Activated CD4-positive, alpha-beta T cell treated with anti-CD3 and anti-CD28 coated beads for 36 hours (primary cell): ENCODE measurements at regions of chr16 and their contacts with region 1.

Region 1: GRCh38 chr16:53054670-53055485 is at the start of gene CHD9:
- DNase-seq: peak; percentile 82
- ATAC-seq: peak; percentile 89
- H3K4me3 Mint-ChIP-seq: peak within 1 kb of the TSS; percentile 70
- H3K27ac Mint-ChIP-seq: peak within 1 kb of the TSS; percentile 83
- H3K4me1 Mint-ChIP-seq: peaks cover 21% of the 10 kb centered on the region
- H3K27me3 Mint-ChIP-seq: peaks cover 6% of the 10 kb centered on the region
- total RNA-seq, gene CHD9: 13.2 to 18.8 TPM

Region 2: GRCh38 chr16:53099318-53100130 is 44.6 kb after region 1 on chr16:
- CTCF ChIA-PET with region 1: interaction called, 10 read pairs
- POLR2A ChIA-PET with region 1: no interaction called
- intact Hi-C with region 1: loop called (anchors 1 to 2 kb)
- DNase-seq: peak; percentile 69
- ATAC-seq: peak; percentile 82
- H3K4me3 Mint-ChIP-seq: peak overlapping the region; percentile 68
- H3K27ac Mint-ChIP-seq: peak overlapping the region; percentile 86
- H3K4me1 Mint-ChIP-seq: peaks cover 18% of the 10 kb centered on the region
- H3K27me3 Mint-ChIP-seq: no peaks in the 10 kb centered on the region

Region 3: GRCh38 chr16:53172517-53172916 is 117.6 kb after region 1 on chr16:
- CTCF ChIA-PET with region 1: no interaction called
- POLR2A ChIA-PET with region 1: no interaction called
- intact Hi-C with region 1: no loop called
- DNase-seq: no peak
- ATAC-seq: no peak
- H3K4me3 Mint-ChIP-seq: no peak overlapping the region
- H3K27ac Mint-ChIP-seq: no peak overlapping the region
- H3K4me1 Mint-ChIP-seq: no peaks in the 10 kb centered on the region
- H3K27me3 Mint-ChIP-seq: no peaks in the 10 kb centered on the region

Region 4: GRCh38 chr16:53207810-53208752 is 153.2 kb after region 1 on chr16:
- CTCF ChIA-PET with region 1: interaction called, 13 read pairs
- POLR2A ChIA-PET with region 1: no interaction called
- intact Hi-C with region 1: loop called (anchors 1 to 5 kb)
- DNase-seq: peak; percentile 24
- ATAC-seq: peak; percentile 55
- H3K4me3 Mint-ChIP-seq: peak overlapping the region; percentile 61
- H3K27ac Mint-ChIP-seq: peak overlapping the region; percentile 83
- H3K4me1 Mint-ChIP-seq: peaks cover 13% of the 10 kb centered on the region
- H3K27me3 Mint-ChIP-seq: no peaks in the 10 kb centered on the region

Region 5: DNA sequence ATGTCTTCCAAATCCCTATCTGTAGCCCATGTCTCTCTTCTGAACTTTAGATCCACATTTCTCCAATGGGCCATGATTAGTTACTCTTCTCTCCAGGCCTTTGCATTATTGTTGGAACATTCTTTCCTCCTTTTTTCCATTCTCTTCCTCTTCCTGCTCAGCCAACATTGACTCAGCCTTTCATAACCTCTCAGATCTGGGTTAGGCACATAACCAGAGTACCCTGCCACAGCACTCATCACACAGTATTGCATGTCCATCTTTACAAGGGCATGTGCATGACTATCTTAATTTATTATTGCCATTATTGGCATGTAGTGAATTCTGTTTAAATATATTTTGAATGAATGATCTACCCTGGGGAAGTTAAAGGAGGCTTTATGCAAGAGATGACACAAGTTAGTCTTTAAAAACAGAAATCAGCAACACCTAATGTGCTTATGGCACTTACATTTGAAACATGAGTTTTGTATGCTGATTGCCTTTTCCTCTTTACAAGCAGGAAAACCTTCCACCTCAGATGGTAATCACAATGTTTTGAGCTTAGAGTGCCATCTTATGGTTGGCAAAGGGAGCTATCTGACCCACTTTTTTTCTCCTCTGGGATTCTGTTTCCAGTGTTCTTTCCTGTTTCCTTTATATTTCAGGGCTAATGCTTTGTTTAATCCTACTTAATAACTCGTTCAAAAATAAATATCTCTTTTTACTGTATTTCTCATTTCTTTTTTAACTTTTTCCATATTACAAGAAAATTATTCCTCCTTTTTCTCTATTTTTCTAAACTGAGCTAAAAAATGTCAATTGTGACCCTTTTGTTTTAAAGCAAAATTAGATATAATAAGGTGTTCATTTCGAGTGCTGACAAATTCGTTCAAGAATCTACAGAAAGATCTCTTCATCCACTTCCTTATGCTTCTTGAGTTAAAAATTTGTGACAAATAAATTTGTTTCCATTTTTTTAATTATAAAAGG is 228.4 kb after region 1 on chr16:
- CTCF ChIA-PET with region 1: interaction called, 6 read pairs
- POLR2A ChIA-PET with region 1: no interaction called
- intact Hi-C with region 1: loop called (anchors 1 to 2 kb)
- DNase-seq: no peak
- ATAC-seq: no peak
- H3K4me3 Mint-ChIP-seq: no peak overlapping the region
- H3K27ac Mint-ChIP-seq: no peak overlapping the region
- H3K4me1 Mint-ChIP-seq: no peaks in the 10 kb centered on the region
- H3K27me3 Mint-ChIP-seq: no peaks in the 10 kb centered on the region

Region 6: DNA sequence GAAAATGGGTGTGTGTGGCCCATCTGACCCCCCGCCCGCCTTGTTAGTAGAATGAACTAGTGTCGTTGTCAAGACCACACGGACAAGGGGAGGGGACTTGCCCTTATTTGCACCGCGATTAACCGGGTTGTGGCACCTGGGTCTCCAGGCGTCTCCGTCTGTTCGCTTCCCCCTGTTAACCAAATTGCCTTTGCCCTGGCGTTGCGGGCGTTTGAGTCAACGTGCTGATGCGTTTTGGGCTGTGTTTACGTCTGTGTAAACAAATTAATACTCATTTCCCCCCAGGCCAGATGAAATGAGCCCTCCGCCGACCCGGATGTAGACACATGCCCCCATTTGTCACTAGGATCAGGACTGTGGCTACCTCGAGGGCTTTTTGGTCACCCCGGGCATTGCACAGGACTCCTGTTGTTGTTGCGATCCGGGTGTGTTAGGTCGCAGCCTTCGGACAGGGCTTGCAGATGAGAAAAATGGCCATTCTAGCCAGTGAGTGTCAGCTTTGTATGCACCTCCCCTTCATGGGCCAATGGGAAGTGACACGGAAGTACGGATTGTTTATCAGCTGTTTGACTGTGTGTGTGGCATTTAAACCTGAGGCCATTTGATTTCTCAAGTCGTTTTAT is 380.3 kb after region 1 on chr16:
- CTCF ChIA-PET with region 1: no interaction called
- POLR2A ChIA-PET with region 1: no interaction called
- intact Hi-C with region 1: loop called in 1 of 2 experiments (anchors 10 kb)
- DNase-seq: peak; percentile 69
- ATAC-seq: peak; percentile 67
- H3K4me3 Mint-ChIP-seq: peak overlapping the region; percentile 98
- H3K27ac Mint-ChIP-seq: peak overlapping the region; percentile 95
- H3K4me1 Mint-ChIP-seq: peaks cover 42% of the 10 kb centered on the region
- H3K27me3 Mint-ChIP-seq: no peaks in the 10 kb centered on the region

Region 7: DNA sequence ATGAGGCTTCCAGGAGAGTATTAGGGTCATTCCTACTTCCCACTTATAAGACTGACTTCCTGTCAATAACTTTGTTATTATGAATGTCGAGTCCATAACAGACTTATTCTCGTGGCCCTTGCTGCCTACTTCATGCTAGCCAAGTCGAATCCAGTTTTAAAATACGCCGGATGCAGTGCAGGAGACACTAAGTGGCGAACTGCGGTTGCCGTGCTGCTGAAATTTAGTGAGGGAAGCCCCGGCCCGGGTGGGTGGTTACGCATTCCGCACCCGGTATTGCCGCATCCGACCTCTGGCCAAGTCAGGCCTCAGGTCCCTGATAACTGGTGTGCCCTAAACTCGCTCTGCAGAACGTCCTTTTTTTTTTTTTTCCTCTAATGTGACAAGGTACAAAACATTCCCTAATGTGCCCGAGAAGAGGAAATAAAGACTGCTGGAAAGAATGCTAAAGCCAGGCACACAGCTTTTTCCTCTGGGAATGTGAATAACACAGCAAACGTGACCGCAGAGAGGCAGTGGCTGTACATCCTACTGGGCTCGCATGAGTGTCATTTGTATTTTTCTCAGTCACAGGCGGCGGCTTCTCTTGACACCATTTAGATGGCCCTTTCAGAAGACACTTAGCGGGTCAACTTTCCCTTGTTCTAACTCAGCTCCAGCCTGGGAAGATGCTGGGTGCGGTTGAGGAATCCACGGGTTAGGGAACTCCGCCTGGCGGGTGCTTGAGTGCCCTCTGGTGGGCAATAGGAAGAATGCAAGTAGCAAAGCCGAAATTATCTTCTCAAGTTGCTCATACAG is 455.2 kb after region 1 on chr16:
- CTCF ChIA-PET with region 1: interaction called, 9 read pairs
- POLR2A ChIA-PET with region 1: no interaction called
- intact Hi-C with region 1: loop called (anchors 1 to 2 kb)
- DNase-seq: peak; percentile 58
- ATAC-seq: peak; percentile 48
- H3K4me3 Mint-ChIP-seq: peak overlapping the region; percentile 26
- H3K27ac Mint-ChIP-seq: no peak overlapping the region
- H3K4me1 Mint-ChIP-seq: peaks cover 32% of the 10 kb centered on the region
- H3K27me3 Mint-ChIP-seq: no peaks in the 10 kb centered on the region